Calu3 (cell line): ENCODE measurements at regions of chr5 and their contacts with region 1.

Region 1: DNA sequence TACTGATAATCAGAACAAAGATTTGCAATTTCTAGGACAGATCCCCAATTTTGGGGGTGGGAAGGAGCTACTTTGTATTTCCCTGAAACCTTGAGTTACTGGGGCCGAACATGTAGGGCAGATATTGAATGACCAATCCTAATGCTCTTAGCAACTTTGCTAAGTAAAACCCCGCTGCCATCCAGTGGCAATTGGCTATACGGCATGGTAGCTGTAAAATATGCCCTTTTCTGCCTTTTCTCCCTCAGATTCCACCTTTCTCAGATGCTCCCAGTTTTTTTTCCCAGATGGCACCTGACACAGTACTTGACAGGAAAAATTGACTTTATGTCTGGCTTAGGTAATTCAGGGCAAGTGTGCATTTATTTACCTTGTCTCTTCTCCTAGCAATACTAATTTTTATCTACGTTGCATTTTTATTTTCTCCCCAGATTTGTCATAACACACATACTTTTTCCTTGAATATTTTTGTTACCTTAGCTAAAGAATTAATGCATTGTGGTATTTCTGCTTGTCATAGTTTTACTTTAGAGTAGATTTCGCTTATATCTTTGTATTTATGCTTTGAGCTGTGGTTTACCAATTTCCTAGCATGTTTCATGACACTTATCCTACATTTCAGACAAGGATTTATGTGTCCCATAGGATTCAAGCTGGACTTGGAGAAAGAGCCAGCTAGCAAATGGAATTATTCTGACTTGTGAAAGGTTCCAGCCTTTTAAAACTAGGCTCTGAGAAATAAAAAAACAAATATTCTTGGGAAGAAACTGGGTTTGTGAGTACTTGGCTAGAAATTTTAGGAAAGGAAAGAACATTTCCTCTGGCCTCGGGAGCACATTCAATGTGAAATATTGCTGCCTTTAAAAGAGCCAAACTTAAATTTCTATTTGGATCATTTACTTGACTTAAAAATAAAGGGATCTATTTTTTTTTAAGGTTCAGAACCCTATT is 37.4 kb downstream of the PIK3R1 start:
- DNase-seq: peak; percentile 67
- H3K4me3 Mint-ChIP-seq: no peak overlapping the region
- H3K27ac Mint-ChIP-seq: no peak overlapping the region
- H3K4me1 Mint-ChIP-seq: peaks cover 62% of the 10 kb centered on the region
- H3K27me3 Mint-ChIP-seq: no peaks in the 10 kb centered on the region
- CTCF ChIP-seq: peak; percentile 49

Region 2: DNA sequence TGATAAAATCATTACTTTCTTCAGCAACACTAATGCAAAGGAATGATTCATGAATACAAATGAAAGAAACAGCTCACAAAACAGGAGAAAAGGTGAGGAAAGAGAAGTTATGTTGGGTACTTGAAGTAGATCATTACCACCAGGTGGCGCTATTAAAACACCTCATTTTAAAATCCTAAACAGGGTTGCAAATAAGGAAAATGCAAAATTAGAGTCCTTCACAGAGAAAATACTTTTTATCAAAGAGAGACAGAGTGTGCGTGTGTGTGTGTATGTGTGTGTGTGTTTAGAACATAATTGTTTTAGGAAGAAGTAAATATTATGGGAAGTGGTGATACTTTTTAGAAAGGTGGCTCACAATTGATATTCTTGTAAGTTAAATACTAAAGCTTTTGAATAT is 1006.8 kb before region 1 on chr5:
- CTCF ChIA-PET with region 1: interaction called, 13 read pairs
- intact Hi-C with region 1: loop called (anchors 1 kb)
- DNase-seq: peak; percentile 47
- H3K4me3 Mint-ChIP-seq: no peak overlapping the region
- H3K27ac Mint-ChIP-seq: no peak overlapping the region
- H3K4me1 Mint-ChIP-seq: peaks cover 8% of the 10 kb centered on the region
- H3K27me3 Mint-ChIP-seq: no peaks in the 10 kb centered on the region
- CTCF ChIP-seq: peak; percentile 58

Region 3: GRCh38 chr5:67315082-67315989 is 937.6 kb before region 1 on chr5:
- CTCF ChIA-PET with region 1: no interaction called
- intact Hi-C with region 1: loop called (anchors 5 kb)
- DNase-seq: peak; percentile 50
- H3K4me3 Mint-ChIP-seq: peak overlapping the region; percentile 17
- H3K27ac Mint-ChIP-seq: peak overlapping the region; percentile 80
- H3K4me1 Mint-ChIP-seq: peaks cover 10% of the 10 kb centered on the region
- H3K27me3 Mint-ChIP-seq: no peaks in the 10 kb centered on the region
- CTCF ChIP-seq: no peak

Region 4: DNA sequence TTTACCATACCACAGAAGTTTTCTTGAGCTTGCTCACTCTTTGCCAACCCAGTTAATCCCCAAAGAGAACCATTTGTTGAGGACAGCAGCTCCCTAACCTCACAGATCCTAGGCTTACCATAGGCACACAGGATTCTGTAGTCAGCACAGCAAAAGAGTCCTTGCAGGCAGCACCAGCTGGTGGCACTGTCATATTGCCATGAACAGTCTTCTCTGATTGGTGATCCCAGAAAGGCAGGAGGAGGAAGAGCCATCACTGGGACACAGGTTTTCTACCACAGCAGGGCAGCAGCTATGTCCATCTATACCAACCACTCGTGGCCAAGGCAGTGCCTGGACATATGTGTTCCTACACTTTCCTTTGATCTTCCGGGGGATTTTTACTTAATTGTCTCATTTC is 759.3 kb before region 1 on chr5:
- CTCF ChIA-PET with region 1: no interaction called
- intact Hi-C with region 1: loop called (anchors 5 kb)
- DNase-seq: peak; percentile 55
- H3K4me3 Mint-ChIP-seq: no peak overlapping the region
- H3K27ac Mint-ChIP-seq: no peak overlapping the region
- H3K4me1 Mint-ChIP-seq: peaks cover 25% of the 10 kb centered on the region
- H3K27me3 Mint-ChIP-seq: no peaks in the 10 kb centered on the region
- CTCF ChIP-seq: no peak

Region 5: GRCh38 chr5:67815455-67816391 is 437.2 kb before region 1 on chr5:
- CTCF ChIA-PET with region 1: no interaction called
- intact Hi-C with region 1: loop called (anchors 10 kb)
- DNase-seq: peak; percentile 64
- H3K4me3 Mint-ChIP-seq: peak overlapping the region; percentile 52
- H3K27ac Mint-ChIP-seq: peak overlapping the region; percentile 89
- H3K4me1 Mint-ChIP-seq: peaks cover 43% of the 10 kb centered on the region
- H3K27me3 Mint-ChIP-seq: no peaks in the 10 kb centered on the region
- CTCF ChIP-seq: no peak

Region 6: GRCh38 chr5:68378204-68378824 is 125.4 kb after region 1 on chr5:
- CTCF ChIA-PET with region 1: no interaction called
- intact Hi-C with region 1: no loop called
- DNase-seq: no peak
- H3K4me3 Mint-ChIP-seq: no peak overlapping the region
- H3K27ac Mint-ChIP-seq: no peak overlapping the region
- H3K4me1 Mint-ChIP-seq: peaks cover 12% of the 10 kb centered on the region
- H3K27me3 Mint-ChIP-seq: no peaks in the 10 kb centered on the region
- CTCF ChIP-seq: no peak

Region 7: GRCh38 chr5:68433923-68434879 is 181.3 kb after region 1 on chr5:
- CTCF ChIA-PET with region 1: no interaction called
- intact Hi-C with region 1: no loop called
- DNase-seq: peak; percentile 97
- H3K4me3 Mint-ChIP-seq: peak overlapping the region; percentile 27
- H3K27ac Mint-ChIP-seq: peak overlapping the region; percentile 88
- H3K4me1 Mint-ChIP-seq: peaks cover 50% of the 10 kb centered on the region
- H3K27me3 Mint-ChIP-seq: no peaks in the 10 kb centered on the region
- CTCF ChIP-seq: no peak